Activated T-helper 1 cell treated with anti-CD3 and anti-CD28 coated beads, Interleukin-12 subunit alpha, Interleukin-12 subunit beta, Interleukin-2, Interleukin-4 antibody, amounts not matched to agents 30 ng/mL and 10 ng/mL and 1 ng/mL, durations not matched to agents 14 hours and 24 hours and 36 hours (primary cell): ENCODE measurements at regions of chr7 and their contacts with region 1.

Region 1: GRCh38 chr7:105387621-105388372 is 924 bp downstream of the SRPK2 start:
- DNase-seq: peak; percentile 37
- H3K4me3 Mint-ChIP-seq: peak overlapping the region; percentile 95
- H3K27ac Mint-ChIP-seq: peak overlapping the region; percentile 63
- H3K4me1 Mint-ChIP-seq: peaks cover 29% of the 10 kb centered on the region
- H3K27me3 Mint-ChIP-seq: peaks cover 4% of the 10 kb centered on the region

Region 2: DNA sequence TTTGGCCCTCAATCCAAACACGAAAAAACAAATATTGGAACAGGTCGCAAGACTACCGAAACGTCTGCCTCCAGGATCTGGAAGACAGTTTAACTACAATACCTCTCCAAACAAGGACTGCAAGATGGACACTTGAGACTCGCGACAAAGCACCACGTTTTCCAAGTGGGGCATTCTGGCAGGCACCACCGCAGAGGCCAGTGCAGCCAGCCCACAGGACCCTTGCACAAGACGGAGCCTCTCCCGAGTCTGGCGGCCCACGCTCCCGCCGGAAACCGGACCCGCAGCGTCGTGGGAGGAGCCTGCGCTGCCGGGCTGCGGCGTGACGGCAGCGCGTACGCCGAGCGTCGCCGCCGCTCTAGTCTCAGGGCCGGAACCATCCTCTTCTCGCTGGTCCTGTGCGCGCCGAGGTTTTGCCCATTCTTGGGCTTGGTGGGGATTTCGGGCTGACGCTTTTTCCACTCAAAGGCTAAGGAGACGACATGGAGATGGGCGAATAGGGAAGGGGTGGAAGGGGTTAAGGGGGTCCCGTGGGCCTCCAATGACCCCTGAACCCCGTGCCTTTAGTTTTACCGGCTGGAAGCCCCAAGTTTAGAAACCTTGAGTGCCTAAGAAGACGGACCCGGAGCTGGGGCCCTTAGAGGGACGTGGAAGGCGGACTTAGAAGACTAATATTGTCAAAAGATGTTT is 1179.9 kb before region 1 on chr7 and contains the start of gene ORC5:
- intact Hi-C with region 1: loop called (anchors 5 kb)
- DNase-seq: peak; percentile 79
- H3K4me3 Mint-ChIP-seq: peak within 1 kb of the TSS; percentile 94
- H3K27ac Mint-ChIP-seq: peak within 1 kb of the TSS; percentile 92
- H3K4me1 Mint-ChIP-seq: peaks cover 43% of the 10 kb centered on the region
- H3K27me3 Mint-ChIP-seq: peaks cover 8% of the 10 kb centered on the region
- total RNA-seq, gene ORC5: 32.5 and 35.8 TPM in 2 replicates

Region 3: GRCh38 chr7:105268511-105269392 is 119.0 kb before region 1 on chr7:
- intact Hi-C with region 1: loop called (anchors 2 kb)
- DNase-seq: no peak
- H3K4me3 Mint-ChIP-seq: peak overlapping the region; percentile 72
- H3K27ac Mint-ChIP-seq: peak overlapping the region; percentile 57
- H3K4me1 Mint-ChIP-seq: peaks cover 26% of the 10 kb centered on the region
- H3K27me3 Mint-ChIP-seq: no peaks in the 10 kb centered on the region

Region 4: GRCh38 chr7:105352018-105352612 is 35.7 kb before region 1 on chr7:
- intact Hi-C with region 1: loop called (anchors 1 kb)
- DNase-seq: peak; percentile 50
- H3K4me3 Mint-ChIP-seq: peak overlapping the region; percentile 52
- H3K27ac Mint-ChIP-seq: peak overlapping the region; percentile 87
- H3K4me1 Mint-ChIP-seq: peaks cover 46% of the 10 kb centered on the region
- H3K27me3 Mint-ChIP-seq: no peaks in the 10 kb centered on the region

Region 5: GRCh38 chr7:105365541-105366534 is 22.0 kb before region 1 on chr7:
- intact Hi-C with region 1: no loop called
- DNase-seq: no peak
- H3K4me3 Mint-ChIP-seq: no peak overlapping the region
- H3K27ac Mint-ChIP-seq: no peak overlapping the region
- H3K4me1 Mint-ChIP-seq: no peaks in the 10 kb centered on the region
- H3K27me3 Mint-ChIP-seq: no peaks in the 10 kb centered on the region

Region 6: GRCh38 chr7:105522062-105522936 is 134.5 kb after region 1 on chr7 and contains the start of gene PUS7:
- intact Hi-C with region 1: loop called (anchors 2 kb)
- DNase-seq: peak; percentile 71
- H3K4me3 Mint-ChIP-seq: peak within 1 kb of the TSS; percentile 98
- H3K27ac Mint-ChIP-seq: peak within 1 kb of the TSS; percentile 96
- H3K4me1 Mint-ChIP-seq: peaks cover 14% of the 10 kb centered on the region
- H3K27me3 Mint-ChIP-seq: no peaks in the 10 kb centered on the region
- total RNA-seq, gene PUS7: 47.8 and 50.7 TPM in 2 replicates